ENCODE measurements at regions of chr21 and their contacts with region 1.

Region 1: DNA sequence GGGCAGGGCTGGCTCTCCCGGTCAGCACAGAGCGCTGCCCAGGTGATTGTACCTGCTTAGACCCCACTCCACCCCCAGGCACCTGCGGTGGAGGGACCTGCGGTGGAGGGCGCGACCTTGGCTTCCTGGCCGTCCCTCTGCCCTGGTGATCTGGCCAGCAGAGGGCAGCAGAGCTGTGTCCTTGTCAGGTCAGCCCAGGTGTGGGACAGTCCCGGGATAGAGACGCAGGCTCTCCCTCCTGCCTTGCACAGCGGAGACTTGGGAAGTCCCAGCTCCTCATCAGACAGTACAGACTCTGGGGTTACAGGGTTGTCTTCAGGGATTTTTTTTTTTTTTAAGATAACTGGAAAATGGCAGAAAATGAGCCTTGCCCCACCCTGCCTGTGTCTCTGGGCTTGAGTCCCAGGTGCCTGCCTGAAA is 10.0 kb downstream of the SLX9 start:
- DNase-seq: peak; percentile 87
- ATAC-seq: peak; percentile 92
- H3K4me3 Mint-ChIP-seq: no peak overlapping the region
- H3K27ac Mint-ChIP-seq: no peak overlapping the region
- H3K4me1 Mint-ChIP-seq: peaks cover 9% of the 10 kb centered on the region
- H3K27me3 Mint-ChIP-seq: no peaks in the 10 kb centered on the region

Region 2: DNA sequence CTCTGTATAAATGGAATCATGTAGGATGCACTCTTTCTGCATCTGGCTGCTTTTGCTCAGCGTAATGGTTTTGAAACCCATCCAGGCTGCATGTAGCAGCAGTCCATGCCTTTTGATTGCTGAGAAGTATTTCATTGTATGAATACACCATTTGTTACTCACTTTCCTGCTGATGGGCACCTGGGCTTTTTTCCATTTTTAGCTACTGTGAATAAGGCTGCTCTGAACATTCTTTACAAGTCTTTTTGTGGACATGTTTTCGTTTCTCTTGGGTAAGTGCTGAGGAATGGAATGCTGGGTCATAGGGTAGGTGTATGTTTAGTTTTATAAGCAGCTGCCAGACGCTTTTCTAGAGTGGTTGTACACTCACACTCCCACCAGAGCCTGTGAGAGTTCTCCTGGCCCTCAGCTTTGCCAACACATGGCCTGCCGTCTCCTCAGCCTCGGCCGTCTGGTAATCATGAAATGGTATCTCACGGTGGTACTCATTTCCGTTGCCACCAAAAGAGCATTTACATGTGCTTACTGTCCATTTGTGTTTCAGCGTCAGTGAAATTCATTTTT is 12.7 kb after region 1 on chr21:
- CTCF ChIA-PET with region 1: interaction called, 20 read pairs
- POLR2A ChIA-PET with region 1: interaction called, 3 read pairs
- DNase-seq: no peak
- ATAC-seq: no peak
- H3K4me3 Mint-ChIP-seq: no peak overlapping the region
- H3K27ac Mint-ChIP-seq: no peak overlapping the region
- H3K4me1 Mint-ChIP-seq: peaks cover 33% of the 10 kb centered on the region
- H3K27me3 Mint-ChIP-seq: no peaks in the 10 kb centered on the region

Region 3: DNA sequence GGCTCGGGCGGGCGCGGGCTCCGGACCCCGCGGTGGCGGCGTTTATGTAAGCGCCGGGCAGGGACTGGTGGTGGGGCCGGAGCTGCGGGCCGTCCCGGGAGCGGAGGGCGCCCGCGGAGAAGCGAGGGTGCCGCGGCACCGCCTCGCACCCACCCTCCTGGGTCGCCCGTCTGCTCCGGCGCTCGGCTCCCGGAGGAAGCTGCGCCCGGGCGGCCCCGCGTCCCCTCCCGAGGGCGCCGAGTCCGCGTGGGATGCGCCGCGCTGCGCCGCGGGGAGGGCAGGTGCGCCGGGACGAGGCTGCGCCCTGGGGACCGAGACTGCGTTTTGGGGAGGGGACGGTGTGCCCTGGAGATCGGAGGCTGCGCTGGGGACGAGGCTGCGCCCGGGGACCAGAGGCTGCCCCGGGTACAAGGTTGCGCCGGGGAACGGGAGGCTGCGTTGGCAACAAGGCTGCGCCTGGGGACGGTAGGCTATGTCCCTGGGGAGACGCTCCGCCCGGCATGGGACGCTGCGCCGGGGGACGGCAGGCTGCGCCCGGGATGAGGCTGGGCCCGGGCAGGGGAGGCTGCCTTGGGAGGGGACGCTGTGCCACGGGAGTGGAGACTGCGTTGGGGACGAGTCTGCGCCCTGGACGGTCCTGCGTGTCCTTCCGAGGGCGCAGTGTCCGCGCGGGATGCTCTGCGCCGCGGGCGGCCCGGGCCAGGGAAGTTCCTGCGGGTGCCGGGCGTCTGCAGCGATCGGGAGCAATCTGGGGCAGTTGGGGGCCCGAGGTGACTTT is 125.2 kb after region 1 on chr21:
- CTCF ChIA-PET with region 1: interaction called, 11 read pairs
- POLR2A ChIA-PET with region 1: no interaction called
- DNase-seq: peak; percentile 32
- ATAC-seq: peak; percentile 5
- H3K4me3 Mint-ChIP-seq: peak overlapping the region; percentile 82
- H3K27ac Mint-ChIP-seq: peak overlapping the region; percentile 78
- H3K4me1 Mint-ChIP-seq: peaks cover 50% of the 10 kb centered on the region
- H3K27me3 Mint-ChIP-seq: no peaks in the 10 kb centered on the region

Region 4: DNA sequence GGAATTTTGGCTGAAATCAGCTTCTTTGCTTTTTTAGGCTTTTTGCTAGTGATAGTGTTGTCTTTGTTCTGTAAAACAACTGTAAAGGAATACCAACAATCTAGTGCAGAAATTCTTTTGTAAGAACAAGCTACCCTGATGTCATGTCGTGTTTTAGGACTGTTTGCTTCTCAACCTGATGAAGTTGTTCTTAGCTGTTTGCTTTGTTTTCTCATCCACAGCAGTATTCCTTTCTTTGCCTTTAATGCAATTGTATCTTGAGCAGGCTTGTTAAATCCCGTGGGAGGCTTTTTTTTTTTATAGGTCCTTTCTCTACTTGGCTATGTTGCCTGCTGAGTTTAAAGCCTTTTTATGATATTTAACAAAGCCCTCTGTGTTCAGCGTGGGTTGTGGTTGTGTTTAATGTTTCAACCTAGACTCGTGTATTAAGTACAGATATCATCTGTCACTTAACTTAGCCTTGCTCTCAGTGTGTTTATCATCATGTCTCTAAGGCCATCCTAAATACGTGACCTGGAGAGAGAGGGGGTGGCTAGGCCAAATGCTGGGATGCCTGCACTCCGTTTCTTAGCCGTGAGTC is 156.2 kb after region 1 on chr21:
- CTCF ChIA-PET with region 1: interaction called, 10 read pairs
- POLR2A ChIA-PET with region 1: no interaction called
- DNase-seq: no peak
- ATAC-seq: no peak
- H3K4me3 Mint-ChIP-seq: no peak overlapping the region
- H3K27ac Mint-ChIP-seq: no peak overlapping the region
- H3K4me1 Mint-ChIP-seq: peaks cover 83% of the 10 kb centered on the region
- H3K27me3 Mint-ChIP-seq: no peaks in the 10 kb centered on the region